Activated CD8-positive, alpha-beta memory T cell treated with anti-CD3 and anti-CD28 coated beads, Interleukin-2, amount 10 ng/mL, durations not matched to agents 7 days and 5 days (primary cell): ENCODE measurements at regions of chr1 and their contacts with region 1.

Region 1: DNA sequence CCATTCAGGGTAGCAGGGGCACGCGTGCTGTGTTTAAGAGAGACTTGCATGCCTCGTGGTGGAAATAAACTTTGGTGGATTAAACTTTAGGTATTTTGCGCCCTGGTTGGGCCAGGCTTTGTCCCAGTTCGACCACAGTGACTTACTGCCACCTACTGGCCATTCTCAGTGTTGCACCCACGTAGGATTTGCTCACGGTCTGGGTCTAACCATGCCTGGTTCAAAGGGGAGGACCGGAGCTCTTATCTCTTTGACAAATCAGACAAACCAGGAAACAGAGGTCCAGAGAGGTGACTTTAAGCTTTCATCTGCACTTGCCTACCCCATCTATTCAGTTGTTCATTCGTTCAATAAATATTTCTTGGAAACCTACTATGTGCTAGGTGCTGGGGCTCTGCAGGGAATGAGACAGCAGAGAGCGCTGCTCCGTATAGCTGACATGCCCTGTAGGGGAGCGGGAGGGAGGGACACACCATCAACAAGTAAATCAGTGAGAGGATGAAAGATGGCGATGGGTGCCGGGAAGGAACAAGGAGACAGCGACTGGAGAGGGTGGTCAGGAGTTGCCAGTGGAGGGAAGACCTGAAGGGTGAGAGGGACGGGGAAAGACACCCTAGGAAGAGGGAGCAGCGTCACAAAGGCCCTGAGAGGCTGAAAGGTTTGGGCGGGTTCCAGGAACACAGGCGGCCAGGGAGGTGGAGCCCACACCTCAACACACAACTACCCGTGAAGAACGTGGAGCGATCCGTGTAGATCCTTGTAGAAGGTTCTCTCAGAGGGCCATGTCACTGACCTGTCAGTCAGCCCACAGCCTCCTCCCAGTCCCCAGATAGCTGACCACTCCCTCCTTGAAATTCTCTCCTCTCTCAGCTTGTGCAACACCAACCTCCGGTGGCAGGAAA is 27.2 kb upstream of the TINAGL1 start:
- DNase-seq: peak; percentile 92
- ATAC-seq: peak; percentile 89
- H3K4me3 Mint-ChIP-seq: peak overlapping the region; percentile 63
- H3K27ac Mint-ChIP-seq: peak overlapping the region; percentile 51
- H3K4me1 Mint-ChIP-seq: peaks cover 12% of the 10 kb centered on the region
- H3K27me3 Mint-ChIP-seq: peaks cover 16% of the 10 kb centered on the region

Region 2: DNA sequence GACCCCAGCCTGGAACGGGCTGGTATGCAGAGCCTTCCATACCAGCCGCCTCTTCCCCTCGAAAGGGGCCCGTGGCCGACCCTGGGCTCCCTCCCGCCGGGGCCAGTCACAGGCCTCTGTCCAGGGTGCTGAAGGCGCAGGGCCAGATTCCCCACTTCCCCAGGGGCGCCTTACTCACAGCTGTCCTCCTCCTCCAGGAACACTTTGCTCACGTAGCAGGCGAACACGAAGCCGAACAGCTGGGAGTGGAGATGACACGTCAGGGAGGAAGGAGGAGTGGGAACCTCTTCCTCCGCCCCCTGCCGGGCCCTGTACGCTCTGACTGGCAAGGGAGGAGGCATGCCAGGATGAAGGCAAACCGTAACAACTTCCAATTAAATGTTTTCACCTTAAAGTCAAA is 366.8 kb before region 1 on chr1:
- CTCF ChIA-PET with region 1: interaction called, 39 read pairs
- DNase-seq: peak; percentile 65
- ATAC-seq: peak; percentile 58
- H3K4me3 Mint-ChIP-seq: no peak overlapping the region
- H3K27ac Mint-ChIP-seq: no peak overlapping the region
- H3K4me1 Mint-ChIP-seq: peaks cover 10% of the 10 kb centered on the region
- H3K27me3 Mint-ChIP-seq: peaks cover 28% of the 10 kb centered on the region

Region 3: DNA sequence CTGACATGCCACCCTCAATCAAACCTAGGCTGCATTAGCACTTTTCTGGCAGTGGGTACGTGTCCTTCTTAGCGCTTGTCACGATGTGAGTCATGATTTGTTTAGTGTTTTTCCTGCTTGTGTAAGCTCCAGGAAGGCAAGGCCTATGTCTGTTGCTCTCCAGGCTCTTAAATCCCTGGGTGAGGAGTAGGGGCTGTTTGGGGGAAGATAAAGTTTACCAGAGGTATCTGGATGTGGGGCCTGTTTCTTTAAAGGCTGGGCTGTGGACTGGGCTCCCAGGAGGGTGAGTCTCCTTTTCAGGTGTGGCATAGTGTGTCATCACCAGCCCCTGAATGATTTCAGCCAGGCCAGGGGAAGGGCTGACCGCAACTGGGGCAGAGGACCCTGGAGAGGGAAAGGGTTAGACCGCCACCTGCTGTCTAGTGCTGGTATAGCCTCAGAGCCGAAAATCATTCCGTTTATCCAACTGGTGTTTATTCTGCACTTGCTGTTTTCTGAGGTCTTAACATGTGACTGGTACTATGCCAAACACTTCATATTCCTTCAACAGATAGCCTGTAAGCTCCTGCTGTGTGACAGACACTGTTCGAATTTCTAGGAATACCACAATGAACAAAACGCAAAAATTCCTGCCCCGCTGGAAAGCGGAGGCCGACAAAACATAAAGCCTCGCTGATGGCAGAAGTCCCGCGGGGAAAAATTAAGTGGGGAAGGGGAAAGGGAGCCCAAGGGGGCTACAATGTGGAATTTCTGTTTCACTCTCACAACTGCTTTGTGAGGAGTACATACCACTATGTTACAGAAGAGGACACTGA is 126.4 kb before region 1 on chr1:
- CTCF ChIA-PET with region 1: interaction called, 29 read pairs
- DNase-seq: peak; percentile 79
- ATAC-seq: peak; percentile 70
- H3K4me3 Mint-ChIP-seq: no peak overlapping the region
- H3K27ac Mint-ChIP-seq: no peak overlapping the region
- H3K4me1 Mint-ChIP-seq: peaks cover 8% of the 10 kb centered on the region
- H3K27me3 Mint-ChIP-seq: peaks cover 22% of the 10 kb centered on the region

Region 4: GRCh38 chr1:31535561-31535960 is 13.6 kb before region 1 on chr1:
- CTCF ChIA-PET with region 1: interaction called, 17 read pairs
- DNase-seq: no peak
- ATAC-seq: no peak
- H3K4me3 Mint-ChIP-seq: no peak overlapping the region
- H3K27ac Mint-ChIP-seq: no peak overlapping the region
- H3K4me1 Mint-ChIP-seq: peaks cover 8% of the 10 kb centered on the region
- H3K27me3 Mint-ChIP-seq: peaks cover 53% of the 10 kb centered on the region

Region 5: GRCh38 chr1:31564134-31564989 is 15.2 kb after region 1 on chr1:
- CTCF ChIA-PET with region 1: interaction called, 20 read pairs
- DNase-seq: peak; percentile 58
- ATAC-seq: peak; percentile 45
- H3K4me3 Mint-ChIP-seq: no peak overlapping the region
- H3K27ac Mint-ChIP-seq: no peak overlapping the region
- H3K4me1 Mint-ChIP-seq: no peaks in the 10 kb centered on the region
- H3K27me3 Mint-ChIP-seq: peaks cover 38% of the 10 kb centered on the region